Right cardiac atrium (tissue), 5 donors: ENCODE measurements at regions of chr9 and their contacts with region 1.

Region 1: GRCh38 chr9:122248448-122248915 is 16.2 kb downstream of the RBM18 start:
- DNase-seq: no peak
- ATAC-seq: no peak
- H3K4me3 ChIP-seq: no peak overlapping the region
- H3K27ac ChIP-seq: no peak overlapping the region
- H3K4me1 ChIP-seq: peaks cover 2% of the 10 kb centered on the region
- H3K27me3 ChIP-seq: no peaks in the 10 kb centered on the region

Region 2: DNA sequence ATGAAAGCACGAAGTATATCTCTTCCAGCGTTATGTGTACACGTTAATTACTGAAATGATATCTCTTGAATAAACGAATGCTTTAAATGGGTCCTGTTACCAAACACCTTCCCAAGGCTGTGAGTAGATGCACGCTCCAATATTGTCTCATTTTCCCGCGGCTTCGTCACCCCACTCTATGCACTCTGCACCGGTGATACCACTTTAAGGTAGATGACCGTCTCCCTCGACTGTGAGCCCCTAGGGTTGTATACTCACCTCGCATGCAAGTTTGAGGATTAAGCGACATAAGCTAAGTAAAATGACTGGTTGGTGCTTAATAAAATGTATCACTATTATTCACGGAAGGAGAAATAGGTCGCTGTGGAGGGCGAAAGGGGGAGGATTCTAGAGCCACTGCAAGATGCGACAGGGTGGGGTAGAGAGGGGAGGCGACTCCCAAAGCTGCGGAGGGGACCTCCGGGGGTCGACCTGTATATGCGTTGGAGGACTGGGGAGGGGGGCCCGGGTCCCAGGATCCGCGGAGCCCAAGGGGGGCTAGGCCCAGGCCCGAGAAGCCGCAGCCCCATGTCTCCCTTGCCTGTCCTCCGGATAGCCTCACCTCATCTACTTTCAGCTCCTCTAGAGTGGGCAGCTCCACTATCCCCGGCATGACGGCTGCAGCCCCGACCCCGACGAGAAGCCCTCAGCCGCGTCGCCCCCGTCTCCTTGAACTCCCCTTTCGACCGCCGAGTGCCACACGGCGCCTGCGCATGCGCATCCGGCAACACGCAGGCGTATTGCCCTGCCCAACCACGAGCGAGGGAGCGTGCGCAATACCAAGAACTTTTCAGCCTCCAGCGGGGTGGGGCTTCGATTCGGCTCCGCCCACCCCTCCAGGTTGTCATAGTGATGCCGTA is 89.2 kb before region 1 on chr9 and contains the starts of genes MORN5 and NDUFA8:
- intact Hi-C with region 1: loop called in 1 of 4 experiments (anchors 10 kb)
- DNase-seq: peak; percentile 97 to 99 (median 99)
- ATAC-seq: peak; percentile 99
- H3K4me3 ChIP-seq: peak within 1 kb of the TSS; percentile 95
- H3K27ac ChIP-seq: peak within 1 kb of the TSS; percentile 98
- H3K4me1 ChIP-seq: peaks cover 3% of the 10 kb centered on the region
- H3K27me3 ChIP-seq: no peaks in the 10 kb centered on the region
- total RNA-seq, gene MORN5: not detected
- total RNA-seq, gene NDUFA8: 210 to 307 (median 265) TPM

Region 3: DNA sequence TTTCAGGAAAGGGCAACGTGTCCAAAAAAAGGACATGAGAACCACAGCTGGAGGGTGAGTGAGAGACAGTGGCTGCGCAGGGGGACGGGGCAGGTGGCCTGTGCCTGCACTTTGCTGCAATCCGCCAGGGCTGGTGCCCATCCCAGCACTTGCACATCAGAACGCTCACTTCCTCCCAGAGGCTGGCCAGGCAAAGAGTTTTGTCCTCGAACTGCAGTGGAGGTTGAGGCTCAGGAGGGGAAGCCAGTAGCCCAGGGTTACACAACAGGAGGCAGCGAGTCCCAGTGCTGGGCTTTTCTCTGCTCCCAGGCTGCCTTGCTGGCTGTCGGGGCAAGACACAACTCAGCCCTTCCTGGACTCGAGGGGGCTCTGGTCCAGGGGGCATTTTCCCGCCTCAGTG is 1140.6 kb after region 1 on chr9:
- intact Hi-C with region 1: no loop called
- DNase-seq: peak in 1 of 3 donors; percentile 20
- ATAC-seq: no peak
- H3K4me3 ChIP-seq: no peak overlapping the region
- H3K27ac ChIP-seq: no peak overlapping the region
- H3K4me1 ChIP-seq: no peaks in the 10 kb centered on the region
- H3K27me3 ChIP-seq: no peaks in the 10 kb centered on the region